ENCODE measurements at regions of chr4 and their contacts with region 1.

Region 1: GRCh38 chr4:129362674-129363274 is 266.8 kb downstream of the C4orf33 start:
- DNase-seq: peak; percentile 75
- H3K4me3 ChIP-seq: no peak overlapping the region
- H3K27ac ChIP-seq: peak overlapping the region; percentile 5
- H3K4me1 ChIP-seq: peaks cover 22% of the 10 kb centered on the region
- H3K27me3 ChIP-seq: no peaks in the 10 kb centered on the region
- CTCF ChIP-seq: peak; percentile 67 to 68
- POLR2A ChIP-seq: no peak

Region 2: DNA sequence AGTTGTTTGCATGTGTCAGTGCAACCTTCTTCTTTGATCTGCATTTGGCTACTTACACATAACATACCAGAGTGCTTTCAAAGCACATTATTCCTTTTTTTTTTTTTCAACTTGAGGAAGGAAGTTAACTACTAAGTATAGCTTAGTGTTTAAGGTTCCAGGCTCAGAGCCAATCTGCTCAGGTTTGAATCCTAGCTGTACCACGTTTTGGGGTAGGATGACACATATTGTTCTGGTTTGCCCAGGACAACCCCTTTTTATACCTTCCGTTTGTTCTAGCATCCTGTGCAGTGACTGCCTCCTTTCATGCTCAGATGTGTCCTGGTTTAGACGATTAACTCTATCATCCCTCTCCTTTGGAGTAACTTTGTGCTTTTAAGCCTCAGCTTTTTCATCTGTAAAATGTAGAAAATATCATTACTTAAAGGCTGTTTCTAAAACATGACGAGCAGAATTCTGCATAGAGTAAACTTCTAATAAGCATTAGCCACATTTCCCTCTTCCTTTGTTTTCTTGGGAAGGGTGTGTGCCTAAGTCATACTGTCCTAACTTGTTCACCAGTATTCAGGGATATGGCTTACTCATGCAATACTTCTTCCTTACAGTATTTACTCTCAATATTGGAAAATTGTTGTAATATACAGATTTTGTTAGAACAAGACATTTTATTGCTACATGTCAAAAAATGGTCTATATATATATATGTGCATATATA is 14.5 kb after region 1 on chr4:
- CTCF ChIA-PET with region 1: interaction called, 14 read pairs
- POLR2A ChIA-PET with region 1: no interaction called
- dilution Hi-C with region 1: no loop called
- intact Hi-C with region 1: no loop called
- DNase-seq: peak; percentile 69
- H3K4me3 ChIP-seq: no peak overlapping the region
- H3K27ac ChIP-seq: no peak overlapping the region
- H3K4me1 ChIP-seq: peaks cover 13% of the 10 kb centered on the region
- H3K27me3 ChIP-seq: no peaks in the 10 kb centered on the region
- CTCF ChIP-seq: no peak
- POLR2A ChIP-seq: no peak

Region 3: DNA sequence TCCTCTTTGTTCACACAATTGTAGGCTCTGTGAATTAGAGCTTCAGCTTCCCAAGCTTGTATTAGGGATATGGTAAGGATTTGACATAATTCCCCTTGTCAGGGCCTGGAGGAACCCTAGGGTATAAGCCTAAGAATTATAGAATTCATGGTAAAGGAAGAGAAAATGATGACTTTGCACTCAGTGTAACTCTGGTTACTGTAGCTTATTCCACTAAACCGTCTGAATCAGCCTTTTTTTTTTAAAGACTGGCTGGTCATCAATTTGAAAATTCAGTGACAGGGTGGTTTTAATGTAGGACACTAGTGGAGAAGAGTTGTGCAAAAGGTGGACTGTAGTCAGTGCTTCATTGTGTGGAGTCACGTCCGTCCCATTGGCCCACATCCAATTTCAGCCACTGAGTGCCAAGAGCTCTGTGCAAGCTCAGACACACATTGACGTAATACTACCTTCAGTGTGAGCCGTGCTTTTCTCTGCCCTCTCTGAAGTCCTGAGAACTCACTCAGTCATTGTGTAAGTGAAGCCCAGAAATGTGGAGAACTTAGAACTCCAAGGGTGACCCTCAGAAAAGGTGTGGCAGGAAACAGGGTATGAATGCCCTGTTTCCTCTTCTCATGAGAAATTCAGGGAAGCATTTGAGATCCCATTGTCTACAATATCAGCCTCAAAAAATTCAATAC is 183.0 kb after region 1 on chr4:
- CTCF ChIA-PET with region 1: interaction called, 5 read pairs
- POLR2A ChIA-PET with region 1: no interaction called
- dilution Hi-C with region 1: no loop called
- intact Hi-C with region 1: loop called (anchors 10 kb)
- DNase-seq: peak; percentile 97
- H3K4me3 ChIP-seq: peak overlapping the region in 1 of 3 experiments; percentile 25
- H3K27ac ChIP-seq: peak overlapping the region; percentile 87
- H3K4me1 ChIP-seq: peaks cover 24% of the 10 kb centered on the region
- H3K27me3 ChIP-seq: no peaks in the 10 kb centered on the region
- CTCF ChIP-seq: no peak
- POLR2A ChIP-seq: peak; percentile 26

Region 4: GRCh38 chr4:129822708-129823504 is 460.1 kb after region 1 on chr4:
- CTCF ChIA-PET with region 1: no interaction called
- POLR2A ChIA-PET with region 1: no interaction called
- dilution Hi-C with region 1: no loop called
- intact Hi-C with region 1: loop called (anchors 10 kb)
- DNase-seq: peak; percentile 94
- H3K4me3 ChIP-seq: no peak overlapping the region
- H3K27ac ChIP-seq: peak overlapping the region; percentile 60
- H3K4me1 ChIP-seq: peaks cover 18% of the 10 kb centered on the region
- H3K27me3 ChIP-seq: no peaks in the 10 kb centered on the region
- CTCF ChIP-seq: no peak
- POLR2A ChIP-seq: peak; percentile 44

Region 5: DNA sequence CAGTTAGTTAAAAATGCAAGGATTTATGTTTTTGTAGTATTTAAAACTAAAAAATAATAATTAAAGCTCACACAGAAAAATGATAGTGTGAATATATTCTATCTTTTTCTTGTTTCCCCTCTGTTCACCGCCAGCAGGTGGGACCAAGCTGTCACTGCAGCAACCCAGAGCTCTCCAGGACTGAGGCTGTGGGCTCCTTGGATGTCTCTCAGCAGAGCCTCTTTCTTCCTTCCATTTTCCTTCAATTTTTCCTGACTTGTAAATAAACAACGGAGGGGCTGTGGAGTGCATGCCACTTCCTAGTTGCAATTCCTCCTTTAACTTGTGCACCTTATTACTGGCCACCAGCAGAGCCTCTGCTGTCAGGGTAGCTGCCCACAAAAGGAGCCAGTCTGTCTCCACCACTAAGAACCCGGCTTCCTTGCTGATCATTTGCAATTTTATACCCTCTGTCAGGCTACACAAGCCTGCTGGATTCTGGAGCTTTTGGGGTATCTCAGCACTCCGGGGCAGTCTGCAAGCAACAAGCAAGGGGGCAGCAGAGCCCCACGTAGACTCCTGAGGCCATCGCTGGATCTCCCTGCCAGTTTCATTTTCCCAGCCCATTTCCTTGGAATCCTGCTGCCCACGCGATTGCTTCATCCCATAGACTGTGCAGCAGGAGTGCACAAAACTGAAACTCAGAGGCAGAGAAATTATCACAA is 1200.6 kb after region 1 on chr4:
- CTCF ChIA-PET with region 1: interaction called, 4 read pairs
- POLR2A ChIA-PET with region 1: no interaction called
- dilution Hi-C with region 1: no loop called
- intact Hi-C with region 1: loop called (anchors 5 kb)
- DNase-seq: peak; percentile 73
- H3K4me3 ChIP-seq: peak overlapping the region; percentile 25 to 69 (median 28)
- H3K27ac ChIP-seq: no peak overlapping the region
- H3K4me1 ChIP-seq: peaks cover 2% of the 10 kb centered on the region
- H3K27me3 ChIP-seq: no peaks in the 10 kb centered on the region
- CTCF ChIP-seq: peak; percentile 53 to 80
- POLR2A ChIP-seq: no peak

Measured in endothelial cell of umbilical vein (primary cell).